Cardiac septum (tissue), 1 donor: ENCODE measurements at regions of chr11 and their contacts with region 1.

Region 1: GRCh38 chr11:126211235-126212088 is at the starts of genes FAM118B and RPUSD4:
- DNase-seq: peak; percentile 99
- total RNA-seq, gene FAM118B: 22.3 TPM
- total RNA-seq, gene RPUSD4: 32.2 TPM

Region 2: GRCh38 chr11:125592305-125593112 is 619.0 kb before region 1 on chr11 and contains the start of gene STT3A:
- intact Hi-C with region 1: loop called (anchors 10 kb)
- DNase-seq: peak; percentile 100
- total RNA-seq, gene STT3A: 57.8 TPM

Region 3: GRCh38 chr11:126172596-126173038 is 38.8 kb before region 1 on chr11:
- intact Hi-C with region 1: no loop called
- DNase-seq: no peak

Region 4: DNA sequence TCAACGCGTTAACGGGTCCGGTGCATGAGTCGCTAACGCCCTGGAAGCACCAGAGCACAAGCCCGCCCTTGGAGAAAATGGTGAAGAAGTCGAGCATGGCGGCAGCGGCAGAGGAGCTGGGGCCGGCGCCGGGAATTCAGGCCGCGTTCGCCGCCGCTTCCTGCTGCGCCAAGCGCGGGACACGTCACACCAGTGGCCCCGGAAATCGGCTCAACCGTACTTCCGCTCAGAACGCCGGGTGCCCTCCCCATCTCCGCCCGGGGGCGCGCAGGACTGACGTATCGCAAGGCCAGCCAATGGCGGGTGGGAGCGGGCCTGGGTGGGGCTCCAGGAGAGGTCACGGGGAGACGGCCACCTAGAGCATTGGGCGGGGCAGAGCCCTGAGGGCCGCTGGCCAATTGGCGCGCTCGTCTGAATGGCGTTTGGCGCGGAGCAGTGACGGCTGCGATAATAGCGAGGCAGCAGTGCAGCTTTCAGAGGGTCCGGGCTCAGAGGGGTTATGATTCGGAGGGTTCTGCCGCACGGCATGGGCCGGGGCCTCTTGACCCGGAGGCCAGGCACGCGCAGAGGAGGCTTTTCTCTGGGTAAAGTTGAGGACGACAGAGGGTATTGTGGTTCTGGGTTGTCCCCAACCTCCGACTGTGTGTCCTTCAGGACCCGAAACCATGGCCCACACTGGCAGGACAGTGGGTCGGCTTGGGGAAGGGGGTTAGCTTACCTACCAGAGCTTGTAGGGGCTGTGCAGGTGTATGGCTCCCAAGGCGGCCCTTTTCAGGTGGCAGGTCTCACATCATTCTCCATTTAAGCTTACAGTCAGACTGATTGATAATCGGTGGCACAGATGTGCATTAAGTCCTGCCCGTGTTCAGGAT is 57.5 kb after region 1 on chr11 and contains the starts of genes FOXRED1 and SRPRA:
- intact Hi-C with region 1: loop called (anchors 1 kb)
- DNase-seq: peak; percentile 100
- total RNA-seq, gene FOXRED1: 23.0 TPM
- total RNA-seq, gene SRPRA: 77.4 TPM

Region 5: DNA sequence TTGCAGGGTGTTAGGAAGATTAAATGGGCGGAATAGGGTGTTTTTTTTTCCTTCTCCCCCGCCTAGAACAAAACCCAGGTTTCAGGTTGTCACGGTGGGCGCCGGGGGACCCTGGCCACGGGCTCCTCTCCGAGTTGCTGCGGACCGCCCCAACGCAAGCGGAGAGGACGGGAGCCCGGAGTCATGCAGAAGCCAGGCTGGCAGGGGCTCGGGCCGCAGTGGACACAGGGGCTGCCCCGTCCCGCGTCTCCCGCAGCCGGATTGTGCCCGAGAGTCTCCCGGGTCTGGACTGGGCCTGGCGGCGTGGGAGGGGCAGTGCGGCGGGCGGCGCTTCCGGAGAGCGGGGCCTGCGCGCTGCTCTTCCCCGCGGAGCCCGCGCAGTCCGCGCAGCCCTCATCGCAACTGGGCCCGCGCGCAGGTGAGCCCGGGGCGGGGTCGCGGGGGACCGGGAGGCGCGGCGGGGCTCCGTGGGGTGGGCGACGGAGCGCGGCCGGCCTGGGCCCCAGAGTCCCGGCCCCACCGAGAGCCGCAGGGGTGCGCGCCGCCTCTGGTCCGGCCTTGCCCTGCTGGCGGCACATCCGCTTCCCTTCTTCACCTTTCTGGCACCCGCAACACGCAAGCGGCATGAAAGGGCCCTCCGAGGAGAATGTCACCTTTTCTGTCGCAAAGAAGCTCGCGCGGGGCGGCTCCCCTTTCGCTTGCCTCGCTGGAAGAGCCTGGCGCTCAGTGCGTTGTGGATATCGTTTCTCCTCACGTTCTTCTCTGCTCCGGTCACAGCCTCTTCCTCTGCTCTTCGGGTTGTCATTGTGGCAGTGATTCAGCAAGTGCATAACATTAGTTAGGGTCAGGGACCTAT is 71.5 kb after region 1 on chr11 and contains the start of gene TIRAP:
- intact Hi-C with region 1: loop called (anchors 5 kb)
- DNase-seq: peak; percentile 88
- total RNA-seq, gene TIRAP: 8.4 TPM

Region 6: DNA sequence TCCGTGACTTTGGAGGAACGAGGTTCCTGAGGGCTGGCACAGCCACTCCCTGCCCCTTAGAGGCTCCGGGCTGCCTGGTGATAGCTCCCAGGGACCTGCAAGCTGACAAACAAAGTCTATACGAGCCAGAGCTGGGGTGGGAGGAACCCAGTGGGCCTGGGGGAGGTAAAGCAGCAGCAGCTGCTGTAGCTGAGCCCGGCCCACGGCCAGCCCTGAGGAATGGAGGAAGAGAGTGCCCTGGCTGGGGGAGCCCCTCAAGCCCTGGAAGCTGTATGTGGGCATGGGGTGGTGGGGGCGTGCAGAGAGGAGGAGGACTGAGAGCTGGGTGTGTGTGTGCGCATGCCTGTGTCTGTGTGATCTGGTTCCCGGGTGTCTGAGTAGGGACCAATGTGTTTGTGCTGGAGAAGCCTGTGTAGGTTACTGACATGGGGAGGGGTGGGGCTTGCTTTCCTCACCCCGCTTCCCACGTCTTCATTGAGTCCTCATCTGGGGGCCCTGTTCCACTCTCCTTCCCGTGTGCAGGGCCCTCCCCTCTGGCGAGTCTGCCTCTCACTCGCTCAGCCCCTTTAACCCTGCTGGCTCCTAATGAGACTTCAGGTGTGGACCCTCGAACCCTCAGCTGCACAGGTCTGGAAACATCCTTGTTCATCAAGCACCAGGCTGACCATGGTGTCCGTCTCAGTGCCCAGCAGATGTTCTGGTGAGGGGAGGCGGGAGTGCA is 154.8 kb after region 1 on chr11:
- intact Hi-C with region 1: no loop called
- DNase-seq: peak; percentile 73